Activated CD4-positive, alpha-beta T cell treated with anti-CD3 and anti-CD28 coated beads, Interleukin-2, amount 10 ng/mL, durations not matched to agents 24 days and 14 days (primary cell): ENCODE measurements at regions of chr6 and their contacts with region 1.

Region 1: GRCh38 chr6:52361945-52362442 is at the start of gene PAQR8:
- DNase-seq: peak; percentile 96
- H3K4me3 Mint-ChIP-seq: peak within 1 kb of the TSS; percentile 99
- H3K27ac Mint-ChIP-seq: peak within 1 kb of the TSS; percentile 92
- H3K4me1 Mint-ChIP-seq: peaks cover 25% of the 10 kb centered on the region
- H3K27me3 Mint-ChIP-seq: no peaks in the 10 kb centered on the region
- total RNA-seq, gene PAQR8: 4.5 and 4.8 TPM in 2 replicates

Region 2: DNA sequence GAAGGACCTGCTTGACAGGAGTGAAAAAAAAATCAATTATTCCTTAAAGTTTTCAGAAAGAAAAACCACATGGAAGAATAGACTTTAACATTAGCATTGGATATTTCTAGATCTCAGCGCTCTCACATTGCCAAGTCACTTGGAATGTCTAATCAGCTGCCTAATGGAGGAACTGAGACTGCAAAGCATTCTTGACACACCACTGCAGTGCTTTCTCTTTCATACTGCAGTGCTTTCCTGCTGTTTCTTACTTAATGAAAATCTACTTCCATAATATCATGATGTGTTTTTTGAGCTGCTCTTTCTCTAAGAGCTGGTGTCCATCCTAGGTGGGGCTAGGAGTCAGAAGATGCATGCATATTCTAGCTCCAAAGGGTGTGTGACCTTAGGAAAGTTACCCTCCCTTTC is 57.0 kb before region 1 on chr6:
- intact Hi-C with region 1: loop called (anchors 2 kb)
- DNase-seq: no peak
- H3K4me3 Mint-ChIP-seq: peak overlapping the region; percentile 63
- H3K27ac Mint-ChIP-seq: peak overlapping the region; percentile 86
- H3K4me1 Mint-ChIP-seq: peaks cover 54% of the 10 kb centered on the region
- H3K27me3 Mint-ChIP-seq: no peaks in the 10 kb centered on the region

Region 3: DNA sequence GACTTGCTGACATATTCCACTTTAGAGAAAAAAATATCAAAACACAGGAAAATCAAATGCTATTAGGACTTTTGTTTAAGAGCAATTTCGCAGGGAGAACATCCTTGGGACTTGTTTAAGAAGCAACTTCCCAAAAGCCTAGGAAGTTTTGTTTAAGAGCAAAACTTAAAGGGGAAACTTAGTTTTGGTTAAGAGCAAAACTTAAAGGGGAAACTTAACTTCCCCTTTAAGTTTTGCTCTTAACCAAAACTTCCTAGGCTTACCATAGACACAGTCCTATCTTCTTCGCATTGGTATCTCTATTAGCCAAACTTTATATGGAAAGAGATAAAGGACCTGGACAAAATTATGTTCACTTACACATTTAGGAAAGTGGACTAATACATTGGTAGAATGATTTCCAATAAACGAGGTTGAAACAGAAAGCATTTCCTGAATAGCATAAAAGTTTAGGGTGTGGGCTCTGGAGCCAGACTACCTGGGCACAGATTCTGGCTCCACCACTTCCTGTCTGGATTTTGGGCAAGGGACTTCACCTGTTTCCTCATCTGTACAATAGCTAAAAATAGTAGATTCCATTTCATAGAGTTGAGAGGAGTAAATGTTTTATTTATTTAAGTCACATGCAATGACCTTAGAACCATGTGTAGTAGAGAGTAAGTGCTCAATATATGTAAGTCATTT is 15.7 kb after region 1 on chr6:
- intact Hi-C with region 1: loop called (anchors 2 kb)
- DNase-seq: no peak
- H3K4me3 Mint-ChIP-seq: peak overlapping the region; percentile 25
- H3K27ac Mint-ChIP-seq: no peak overlapping the region
- H3K4me1 Mint-ChIP-seq: peaks cover 30% of the 10 kb centered on the region
- H3K27me3 Mint-ChIP-seq: no peaks in the 10 kb centered on the region

Region 4: GRCh38 chr6:52389626-52390360 is 27.8 kb after region 1 on chr6:
- intact Hi-C with region 1: loop called (anchors 2 kb)
- DNase-seq: peak; percentile 87
- H3K4me3 Mint-ChIP-seq: peak overlapping the region; percentile 66
- H3K27ac Mint-ChIP-seq: peak overlapping the region; percentile 85
- H3K4me1 Mint-ChIP-seq: peaks cover 59% of the 10 kb centered on the region
- H3K27me3 Mint-ChIP-seq: no peaks in the 10 kb centered on the region

Region 5: DNA sequence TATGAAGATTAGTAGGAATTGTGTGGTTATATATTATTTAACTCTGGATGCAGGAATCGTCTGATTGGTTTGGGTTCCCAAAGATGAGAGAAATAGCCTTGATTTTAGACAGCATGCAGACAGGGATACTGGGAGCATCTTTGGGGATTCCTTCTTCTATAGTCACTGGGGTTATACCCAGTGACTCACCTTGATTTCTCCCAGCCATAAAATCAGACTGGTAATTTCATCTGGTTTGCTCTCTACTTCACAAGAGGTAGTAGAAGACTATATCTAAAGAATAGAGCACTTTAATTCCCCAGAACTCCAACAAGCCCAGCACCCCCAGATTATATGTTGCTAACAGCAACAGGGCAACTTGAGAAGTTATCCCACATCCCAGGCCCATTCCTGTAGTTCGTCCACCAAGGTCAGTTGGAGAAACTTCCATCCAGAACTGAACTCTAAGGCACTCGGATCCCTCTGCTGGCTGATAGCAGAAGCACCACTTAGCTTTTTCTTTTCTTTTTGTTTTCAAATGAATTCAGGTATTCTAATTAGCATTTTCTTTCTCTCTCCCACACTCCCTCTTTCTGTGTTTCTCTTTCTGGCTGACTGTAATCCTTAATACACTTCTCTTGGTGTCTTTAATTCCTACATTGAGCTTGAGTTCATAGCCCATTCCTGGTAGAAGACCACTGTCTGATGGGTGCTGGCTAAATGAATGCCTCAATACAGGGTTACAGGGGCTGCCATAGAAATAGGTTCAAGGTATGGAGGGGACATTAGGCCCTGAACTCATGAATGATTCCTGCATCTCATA is 37.7 kb after region 1 on chr6:
- intact Hi-C with region 1: loop called (anchors 1 kb)
- DNase-seq: peak; percentile 83
- H3K4me3 Mint-ChIP-seq: no peak overlapping the region
- H3K27ac Mint-ChIP-seq: no peak overlapping the region
- H3K4me1 Mint-ChIP-seq: peaks cover 45% of the 10 kb centered on the region
- H3K27me3 Mint-ChIP-seq: no peaks in the 10 kb centered on the region

Region 6: DNA sequence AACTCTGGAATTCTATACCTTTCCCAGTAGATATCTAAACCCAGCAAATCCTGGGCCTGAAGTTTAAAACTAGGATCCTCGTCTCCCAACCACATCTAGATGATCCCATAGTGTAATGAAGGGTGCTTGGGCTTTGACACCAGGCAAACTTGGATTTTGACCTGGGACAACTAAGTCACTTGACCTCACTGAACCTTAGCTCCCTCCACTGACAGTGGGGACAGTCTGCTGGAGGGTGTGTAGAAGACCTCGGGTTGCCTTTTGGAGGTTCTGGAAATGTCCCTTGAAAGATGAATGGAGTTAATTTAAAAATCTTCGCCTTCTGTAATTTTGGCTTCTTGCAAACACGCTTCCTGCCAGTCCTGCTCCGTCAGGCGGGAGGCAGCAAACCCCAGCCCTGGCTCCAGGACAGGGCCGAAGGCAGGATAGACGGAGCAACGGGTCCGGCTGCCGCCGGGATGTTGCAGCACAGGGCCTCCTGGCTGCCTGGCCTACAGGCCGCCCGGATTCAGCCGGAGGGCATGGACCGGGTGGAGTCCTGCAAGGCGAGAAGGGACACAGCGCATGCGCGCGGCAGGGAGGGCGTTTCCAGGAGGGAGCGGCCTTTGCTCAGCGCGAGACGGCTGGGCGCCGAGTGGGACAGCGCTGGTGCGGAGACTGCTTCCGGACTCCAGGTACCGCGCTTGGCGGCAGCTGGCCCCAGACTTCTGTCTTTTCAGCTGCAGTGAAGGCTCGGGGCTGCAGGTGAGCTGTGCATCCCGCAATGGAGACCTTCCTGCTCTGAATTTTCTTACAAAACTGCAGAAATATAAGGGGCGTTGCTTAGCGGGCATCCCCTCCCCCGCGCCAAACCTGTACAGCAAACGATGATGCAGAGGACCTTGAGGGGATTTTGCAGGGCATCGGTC is 308.8 kb after region 1 on chr6 and contains the start of gene TMEM14A:
- intact Hi-C with region 1: no loop called
- DNase-seq: peak; percentile 98
- H3K4me3 Mint-ChIP-seq: peak within 1 kb of the TSS; percentile 92
- H3K27ac Mint-ChIP-seq: peak within 1 kb of the TSS; percentile 82
- H3K4me1 Mint-ChIP-seq: peaks cover 24% of the 10 kb centered on the region
- H3K27me3 Mint-ChIP-seq: no peaks in the 10 kb centered on the region
- total RNA-seq, gene TMEM14A: 12.7 and 13.0 TPM in 2 replicates

Region 7: DNA sequence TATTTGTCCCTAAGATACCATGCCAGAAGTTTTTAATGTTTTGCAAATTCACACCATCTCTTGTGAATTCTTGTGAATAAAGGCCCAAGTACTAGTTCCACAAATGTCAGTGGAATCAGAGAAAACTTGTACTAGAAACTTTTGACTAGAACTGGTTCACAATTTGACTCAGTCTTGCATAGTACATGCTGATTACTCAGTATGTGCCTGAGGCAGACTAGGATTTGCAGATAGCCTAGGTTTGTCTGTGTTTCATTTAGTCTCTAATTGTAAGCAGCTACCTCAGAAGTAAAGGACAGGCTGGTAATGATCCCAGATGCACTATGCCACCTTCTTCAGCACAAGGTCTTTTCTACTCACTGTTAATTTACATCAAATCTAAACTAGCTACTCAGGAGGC is 667.3 kb after region 1 on chr6:
- intact Hi-C with region 1: no loop called
- DNase-seq: no peak
- H3K4me3 Mint-ChIP-seq: no peak overlapping the region
- H3K27ac Mint-ChIP-seq: peak overlapping the region; percentile 17
- H3K4me1 Mint-ChIP-seq: peaks cover 12% of the 10 kb centered on the region
- H3K27me3 Mint-ChIP-seq: no peaks in the 10 kb centered on the region